IMR-90 (cell line): ENCODE measurements at regions of chr10 and their contacts with region 1.

Region 1: GRCh38 chr10:22156224-22156623 is 61.6 kb downstream of the EBLN1 start:
- DNase-seq: no peak
- ATAC-seq: no peak
- H3K4me3 ChIP-seq: no peak overlapping the region
- H3K27ac ChIP-seq: no peak overlapping the region
- H3K4me1 ChIP-seq: no peaks in the 10 kb centered on the region
- H3K27me3 ChIP-seq: no peaks in the 10 kb centered on the region
- CTCF ChIP-seq: no peak
- POLR2A ChIP-seq: no peak
- RAD21 ChIP-seq: no peak

Region 2: DNA sequence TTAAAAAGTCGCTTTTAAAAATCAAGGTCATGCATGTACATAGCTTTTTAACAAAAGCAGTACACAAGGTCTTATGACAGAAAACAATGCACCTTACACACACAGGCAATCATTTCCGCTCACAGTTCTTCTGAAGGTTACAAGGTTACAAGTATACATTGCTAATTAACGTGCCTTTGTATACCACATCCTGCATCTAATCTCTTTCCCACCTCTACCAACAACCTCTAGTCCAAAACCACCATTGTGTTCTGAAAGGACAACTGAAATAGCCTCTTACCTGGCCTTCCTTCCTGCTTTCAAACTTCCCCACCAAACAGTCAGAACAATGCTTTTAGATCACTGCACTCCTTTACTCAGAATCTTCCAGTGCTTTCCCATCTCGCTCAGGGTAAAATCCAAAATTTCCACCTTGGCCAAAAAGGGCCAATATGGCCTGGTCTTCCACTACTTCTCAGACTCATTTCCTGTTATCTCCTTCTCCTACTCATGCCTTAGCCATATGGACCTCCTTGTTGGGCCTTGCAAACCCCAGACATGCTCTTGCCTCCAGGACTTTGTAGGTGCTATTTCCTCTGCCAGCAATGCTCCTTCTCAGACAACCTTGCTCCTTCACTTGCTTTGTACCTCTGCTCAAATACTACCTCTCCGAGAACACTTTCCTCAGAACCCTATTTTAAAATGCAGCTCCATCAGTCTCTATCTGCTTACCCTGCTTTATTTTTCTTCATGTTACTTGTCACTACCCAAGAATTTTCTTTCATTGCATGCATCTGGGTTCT is 358.0 kb before region 1 on chr10:
- CTCF ChIA-PET with region 1: no interaction called
- POLR2A ChIA-PET with region 1: no interaction called
- dilution Hi-C with region 1: no loop called
- in situ Hi-C with region 1: no loop called
- intact Hi-C with region 1: no loop called
- DNase-seq: no peak
- ATAC-seq: no peak
- H3K4me3 ChIP-seq: no peak overlapping the region
- H3K27ac ChIP-seq: no peak overlapping the region
- H3K4me1 ChIP-seq: no peaks in the 10 kb centered on the region
- H3K27me3 ChIP-seq: no peaks in the 10 kb centered on the region
- CTCF ChIP-seq: no peak
- POLR2A ChIP-seq: no peak
- RAD21 ChIP-seq: no peak

Region 3: GRCh38 chr10:21969326-21970287 is 186.6 kb before region 1 on chr10:
- CTCF ChIA-PET with region 1: interaction called, 11 read pairs
- POLR2A ChIA-PET with region 1: no interaction called
- dilution Hi-C with region 1: no loop called
- in situ Hi-C with region 1: no loop called
- intact Hi-C with region 1: no loop called
- DNase-seq: peak; percentile 45
- ATAC-seq: peak; percentile 66
- H3K4me3 ChIP-seq: no peak overlapping the region
- H3K27ac ChIP-seq: no peak overlapping the region
- H3K4me1 ChIP-seq: no peaks in the 10 kb centered on the region
- H3K27me3 ChIP-seq: no peaks in the 10 kb centered on the region
- CTCF ChIP-seq: no peak
- POLR2A ChIP-seq: no peak
- RAD21 ChIP-seq: no peak

Region 4: GRCh38 chr10:22180724-22181123 is 24.5 kb after region 1 on chr10:
- CTCF ChIA-PET with region 1: no interaction called
- POLR2A ChIA-PET with region 1: no interaction called
- dilution Hi-C with region 1: no loop called
- in situ Hi-C with region 1: no loop called
- intact Hi-C with region 1: no loop called
- DNase-seq: no peak
- ATAC-seq: no peak
- H3K4me3 ChIP-seq: no peak overlapping the region
- H3K27ac ChIP-seq: no peak overlapping the region
- H3K4me1 ChIP-seq: no peaks in the 10 kb centered on the region
- H3K27me3 ChIP-seq: no peaks in the 10 kb centered on the region
- CTCF ChIP-seq: no peak
- POLR2A ChIP-seq: no peak
- RAD21 ChIP-seq: no peak